Gastrocnemius medialis (tissue), 4 donors: ENCODE measurements at regions of chr4 and their contacts with region 1.

Region 1: GRCh38 chr4:81405894-81406401 is 65.8 kb downstream of the RASGEF1B start:
- DNase-seq: peak in 1 of 2 donors; percentile 35
- ATAC-seq: peak; percentile 91 to 98
- H3K4me3 ChIP-seq: peak overlapping the region in 2 of 4 donors; percentile 15 to 18
- H3K27ac ChIP-seq: no peak overlapping the region
- H3K4me1 ChIP-seq: no peaks in the 10 kb centered on the region
- H3K27me3 ChIP-seq: no peaks in the 10 kb centered on the region
- CTCF ChIP-seq: peak; percentile 61 to 77 (median 72)
- POLR2A ChIP-seq: no peak

Region 2: GRCh38 chr4:81482326-81482725 is 76.4 kb after region 1 on chr4:
- in situ Hi-C with region 1: no loop called
- intact Hi-C with region 1: no loop called
- DNase-seq: no peak
- ATAC-seq: no peak
- H3K4me3 ChIP-seq: no peak overlapping the region
- H3K27ac ChIP-seq: no peak overlapping the region
- H3K4me1 ChIP-seq: no peaks in the 10 kb centered on the region
- H3K27me3 ChIP-seq: no peaks in the 10 kb centered on the region
- CTCF ChIP-seq: no peak
- POLR2A ChIP-seq: no peak

Region 3: GRCh38 chr4:81844717-81845116 is 438.8 kb after region 1 on chr4:
- in situ Hi-C with region 1: no loop called
- intact Hi-C with region 1: loop called (anchors 1 kb)
- DNase-seq: peak; percentile 17 to 64
- ATAC-seq: peak; percentile 89 to 95
- H3K4me3 ChIP-seq: no peak overlapping the region
- H3K27ac ChIP-seq: no peak overlapping the region
- H3K4me1 ChIP-seq: peaks cover 0 to 3% of the 10 kb centered on the region in 2 donors
- H3K27me3 ChIP-seq: no peaks in the 10 kb centered on the region
- CTCF ChIP-seq: peak; percentile 57 to 74 (median 68)
- POLR2A ChIP-seq: no peak

Region 4: GRCh38 chr4:82201805-82202641 is 796.1 kb after region 1 on chr4:
- in situ Hi-C with region 1: no loop called
- intact Hi-C with region 1: loop called (anchors 10 kb)
- DNase-seq: no peak
- ATAC-seq: no peak
- H3K4me3 ChIP-seq: no peak overlapping the region
- H3K27ac ChIP-seq: no peak overlapping the region
- H3K4me1 ChIP-seq: no peaks in the 10 kb centered on the region
- H3K27me3 ChIP-seq: no peaks in the 10 kb centered on the region
- CTCF ChIP-seq: peak in 4 of 5 experiments; percentile 14 to 34 (median 24)
- POLR2A ChIP-seq: no peak

Region 5: GRCh38 chr4:82268050-82268825 is 862.3 kb after region 1 on chr4:
- in situ Hi-C with region 1: loop called in 1 of 4 experiments (anchors 10 kb)
- intact Hi-C with region 1: loop called (anchors 2 kb)
- DNase-seq: peak; percentile 12 to 19
- ATAC-seq: peak; percentile 76 to 84
- H3K4me3 ChIP-seq: no peak overlapping the region
- H3K27ac ChIP-seq: no peak overlapping the region
- H3K4me1 ChIP-seq: no peaks in the 10 kb centered on the region
- H3K27me3 ChIP-seq: no peaks in the 10 kb centered on the region
- CTCF ChIP-seq: peak in 4 of 5 experiments; percentile 21 to 63 (median 46)
- POLR2A ChIP-seq: no peak

Region 6: GRCh38 chr4:82275431-82276331 is 869.7 kb after region 1 on chr4:
- in situ Hi-C with region 1: loop called in 1 of 4 experiments (anchors 10 kb)
- intact Hi-C with region 1: no loop called
- DNase-seq: no peak
- ATAC-seq: no peak
- H3K4me3 ChIP-seq: no peak overlapping the region
- H3K27ac ChIP-seq: no peak overlapping the region
- H3K4me1 ChIP-seq: no peaks in the 10 kb centered on the region
- H3K27me3 ChIP-seq: no peaks in the 10 kb centered on the region
- CTCF ChIP-seq: no peak
- POLR2A ChIP-seq: no peak